Caco-2 (cell line): ENCODE measurements at regions of chr16 and their contacts with region 1.

Region 1: GRCh38 chr16:12026741-12027490 is 50.4 kb downstream of the SNX29 start:
- DNase-seq: no peak
- H3K4me3 ChIP-seq: no peak overlapping the region
- H3K4me3 Mint-ChIP-seq: no peak overlapping the region
- H3K27ac Mint-ChIP-seq: no peak overlapping the region
- H3K4me1 ChIP-seq: peaks cover 21% of the 10 kb centered on the region
- H3K4me1 Mint-ChIP-seq: peaks cover 17% of the 10 kb centered on the region
- H3K27me3 ChIP-seq: no peaks in the 10 kb centered on the region
- H3K27me3 Mint-ChIP-seq: no peaks in the 10 kb centered on the region
- CTCF ChIP-seq: no peak

Region 2: GRCh38 chr16:11816103-11816502 is 210.8 kb before region 1 on chr16:
- CTCF ChIA-PET with region 1: no interaction called
- POLR2A ChIA-PET with region 1: no interaction called
- intact Hi-C with region 1: no loop called
- DNase-seq: no peak
- H3K4me3 ChIP-seq: no peak overlapping the region
- H3K4me3 Mint-ChIP-seq: no peak overlapping the region
- H3K27ac Mint-ChIP-seq: no peak overlapping the region
- H3K4me1 ChIP-seq: no peaks in the 10 kb centered on the region
- H3K4me1 Mint-ChIP-seq: no peaks in the 10 kb centered on the region
- H3K27me3 ChIP-seq: no peaks in the 10 kb centered on the region
- H3K27me3 Mint-ChIP-seq: no peaks in the 10 kb centered on the region
- CTCF ChIP-seq: no peak

Region 3: GRCh38 chr16:11977376-11978041 is 49.4 kb before region 1 on chr16:
- CTCF ChIA-PET with region 1: no interaction called
- POLR2A ChIA-PET with region 1: no interaction called
- intact Hi-C with region 1: loop called (anchors 10 kb)
- DNase-seq: no peak
- H3K4me3 ChIP-seq: peak overlapping the region; percentile 95
- H3K4me3 Mint-ChIP-seq: peak overlapping the region; percentile 98
- H3K27ac Mint-ChIP-seq: peak overlapping the region; percentile 96
- H3K4me1 ChIP-seq: no peaks in the 10 kb centered on the region
- H3K4me1 Mint-ChIP-seq: peaks cover 16% of the 10 kb centered on the region
- H3K27me3 ChIP-seq: no peaks in the 10 kb centered on the region
- H3K27me3 Mint-ChIP-seq: no peaks in the 10 kb centered on the region
- CTCF ChIP-seq: no peak